Pancreas (tissue), 10 donors: ENCODE measurements at regions of chr11 and their contacts with region 1.

Region 1: DNA sequence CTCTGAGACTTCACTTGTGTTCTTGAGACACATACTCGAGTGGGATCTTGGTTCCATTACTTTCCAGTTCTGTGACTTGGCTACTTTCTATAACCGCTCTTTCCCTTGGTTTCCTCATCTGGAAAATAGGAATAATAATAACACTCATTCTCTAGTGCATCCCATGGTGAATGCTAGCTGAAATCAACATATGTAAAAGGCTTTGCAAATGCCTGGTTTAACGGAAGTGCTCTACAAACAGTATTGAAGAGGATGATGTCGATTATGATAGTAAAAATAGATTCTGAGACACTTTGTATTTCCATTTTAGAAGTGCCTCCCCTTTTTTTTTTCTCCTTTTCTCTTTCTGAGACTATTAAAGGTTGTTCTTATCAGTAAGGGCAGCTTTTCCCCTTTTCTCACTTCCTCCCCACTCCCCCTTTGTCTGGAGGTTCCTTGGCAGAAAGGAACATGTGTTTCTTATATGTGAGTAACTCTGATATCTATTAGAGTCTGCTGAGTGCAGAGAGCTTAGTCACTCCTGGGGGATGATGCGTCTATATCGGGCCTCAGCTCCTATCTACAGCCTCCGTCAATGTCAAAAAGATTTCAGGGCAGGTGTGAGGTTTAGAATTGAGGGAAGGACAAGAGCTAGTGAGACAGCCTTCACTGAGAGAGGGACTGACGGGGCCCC is 489.3 kb downstream of the NTM start:
- DNase-seq: no peak
- ATAC-seq: no peak
- H3K4me3 ChIP-seq: no peak overlapping the region
- H3K27ac ChIP-seq: no peak overlapping the region
- H3K4me1 ChIP-seq: no peaks in the 10 kb centered on the region
- H3K27me3 ChIP-seq: no peaks in the 10 kb centered on the region
- CTCF ChIP-seq: no peak

Region 2: DNA sequence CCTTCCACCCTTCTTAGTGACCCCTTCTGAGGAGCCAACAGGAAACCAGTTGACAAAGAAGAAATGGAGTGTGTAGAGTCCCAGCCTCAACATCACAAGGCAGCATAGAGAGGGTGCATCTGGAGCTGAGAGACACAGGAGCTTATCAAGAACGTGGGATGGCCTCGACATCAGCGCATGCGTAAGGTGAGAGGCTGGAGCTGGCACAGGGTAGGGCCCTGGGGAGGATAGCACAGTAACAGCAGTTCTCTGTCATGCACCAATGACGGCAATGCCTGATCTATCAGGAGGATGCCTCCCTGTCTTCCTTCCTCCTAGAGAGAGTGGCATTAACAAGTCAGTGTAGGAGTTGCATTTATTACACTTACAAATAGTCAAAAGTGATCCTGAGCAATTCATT is 63.1 kb before region 1 on chr11:
- intact Hi-C with region 1: loop called in 1 of 3 experiments (anchors 10 kb)
- DNase-seq: no peak
- ATAC-seq: peak in 1 of 4 donors; percentile 39
- H3K4me3 ChIP-seq: no peak overlapping the region
- H3K27ac ChIP-seq: no peak overlapping the region
- H3K4me1 ChIP-seq: no peaks in the 10 kb centered on the region
- H3K27me3 ChIP-seq: peaks cover 0 to 5% (median 0%) of the 10 kb centered on the region in 4 donors
- CTCF ChIP-seq: no peak